PC-3 (cell line): ENCODE measurements at regions of chr2 and their contacts with region 1.

Region 1: GRCh38 chr2:57720728-57721627 is 325.6 kb upstream of the VRK2 start:
- DNase-seq: peak; percentile 76
- ATAC-seq: peak; percentile 97
- H3K4me3 ChIP-seq: peak overlapping the region; percentile 45
- H3K27ac ChIP-seq: no peak overlapping the region
- H3K4me1 ChIP-seq: peaks cover 15% of the 10 kb centered on the region
- H3K27me3 ChIP-seq: no peaks in the 10 kb centered on the region
- CTCF ChIP-seq: peak; percentile 96

Region 2: GRCh38 chr2:57674025-57674424 is 47.0 kb before region 1 on chr2:
- CTCF ChIA-PET with region 1: no interaction called
- POLR2A ChIA-PET with region 1: no interaction called
- intact Hi-C with region 1: no loop called
- DNase-seq: no peak
- ATAC-seq: no peak
- H3K4me3 ChIP-seq: no peak overlapping the region
- H3K27ac ChIP-seq: no peak overlapping the region
- H3K4me1 ChIP-seq: peaks cover 4% of the 10 kb centered on the region; the same call in 1 of the 2 replicates
- H3K27me3 ChIP-seq: peaks cover 5% of the 10 kb centered on the region; the same call in 1 of the 2 replicates
- CTCF ChIP-seq: no peak

Region 3: GRCh38 chr2:57701391-57701815 is 19.6 kb before region 1 on chr2:
- CTCF ChIA-PET with region 1: no interaction called
- POLR2A ChIA-PET with region 1: no interaction called
- intact Hi-C with region 1: no loop called
- DNase-seq: no peak
- ATAC-seq: no peak
- H3K4me3 ChIP-seq: no peak overlapping the region
- H3K27ac ChIP-seq: no peak overlapping the region
- H3K4me1 ChIP-seq: 0 out of 2 replicates have a peak, but pooled peaks cover under 1% of the 10 kb centered on the region
- H3K27me3 ChIP-seq: no peaks in the 10 kb centered on the region
- CTCF ChIP-seq: 0 out of 2 replicates have a peak, but pooled peaks have one; percentile 16

Region 4: GRCh38 chr2:57796527-57796926 is 75.5 kb after region 1 on chr2:
- CTCF ChIA-PET with region 1: no interaction called
- POLR2A ChIA-PET with region 1: no interaction called
- intact Hi-C with region 1: no loop called
- DNase-seq: no peak
- ATAC-seq: no peak
- H3K4me3 ChIP-seq: no peak overlapping the region
- H3K27ac ChIP-seq: no peak overlapping the region
- H3K4me1 ChIP-seq: no peaks in the 10 kb centered on the region
- H3K27me3 ChIP-seq: no peaks in the 10 kb centered on the region
- CTCF ChIP-seq: no peak

Region 5: DNA sequence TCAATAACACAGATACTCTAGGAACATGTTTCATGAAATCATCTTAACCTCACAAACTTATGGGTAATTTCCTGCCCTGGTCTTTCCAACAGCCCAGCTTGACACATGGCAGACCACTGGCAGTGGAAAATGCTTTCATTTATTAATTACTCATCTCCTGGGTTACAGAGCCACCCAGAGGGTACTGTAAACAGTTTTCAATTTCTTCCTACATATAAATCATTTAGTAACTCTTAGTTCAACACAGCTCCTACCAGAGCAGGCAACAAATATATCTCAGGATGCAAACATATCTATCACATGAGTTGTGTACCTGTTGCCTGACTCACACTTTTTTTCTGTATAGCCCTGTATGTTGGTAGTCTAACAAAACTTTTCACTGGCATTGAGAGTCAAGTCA is 226.4 kb after region 1 on chr2:
- CTCF ChIA-PET with region 1: no interaction called
- POLR2A ChIA-PET with region 1: no interaction called
- intact Hi-C with region 1: loop called (anchors 5 kb)
- DNase-seq: peak; percentile 58
- ATAC-seq: peak; percentile 93
- H3K4me3 ChIP-seq: no peak overlapping the region
- H3K27ac ChIP-seq: no peak overlapping the region
- H3K4me1 ChIP-seq: 0 out of 2 replicates have a peak, but pooled peaks cover 12% of the 10 kb centered on the region
- H3K27me3 ChIP-seq: no peaks in the 10 kb centered on the region
- CTCF ChIP-seq: peak; percentile 45

Region 6: DNA sequence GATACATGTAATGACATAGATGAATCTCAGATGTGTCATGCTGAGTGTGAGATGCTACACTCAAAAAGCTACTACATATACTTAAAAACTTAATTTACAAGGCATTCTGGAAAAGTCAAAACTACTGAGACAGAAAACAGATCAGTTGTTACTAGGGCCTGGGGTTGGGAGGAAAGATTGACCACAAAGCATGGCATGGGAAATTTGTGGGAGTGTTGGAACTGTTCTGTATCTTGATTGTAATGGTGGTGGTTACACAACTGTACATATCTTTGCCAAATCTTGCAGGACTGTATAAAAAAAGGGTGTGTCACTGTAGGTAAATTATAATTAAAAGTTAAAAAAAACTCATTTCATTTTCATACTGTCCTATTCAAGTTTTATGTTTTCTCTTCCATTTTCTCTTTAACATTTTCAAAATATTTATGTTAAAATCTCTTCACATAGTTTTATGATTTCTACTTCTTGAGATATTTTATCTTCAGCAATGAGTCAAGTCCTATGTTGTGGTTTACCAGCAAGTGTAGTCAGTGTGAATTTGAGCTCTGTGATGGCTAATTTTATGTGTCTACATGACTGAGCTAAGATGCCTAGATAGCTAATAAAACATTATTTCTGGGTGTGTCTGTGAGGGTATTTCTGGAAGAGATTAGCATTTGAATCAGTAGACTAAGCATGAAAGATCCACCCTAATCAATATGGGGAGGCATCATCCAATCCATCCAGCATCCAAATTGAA is 267.0 kb after region 1 on chr2:
- CTCF ChIA-PET with region 1: no interaction called
- POLR2A ChIA-PET with region 1: interaction called, 11 read pairs
- intact Hi-C with region 1: no loop called
- DNase-seq: peak; percentile 76
- ATAC-seq: peak; percentile 88
- H3K4me3 ChIP-seq: no peak overlapping the region
- H3K27ac ChIP-seq: peak overlapping the region; percentile 67
- H3K4me1 ChIP-seq: peaks cover 22% of the 10 kb centered on the region
- H3K27me3 ChIP-seq: no peaks in the 10 kb centered on the region
- CTCF ChIP-seq: no peak

Region 7: DNA sequence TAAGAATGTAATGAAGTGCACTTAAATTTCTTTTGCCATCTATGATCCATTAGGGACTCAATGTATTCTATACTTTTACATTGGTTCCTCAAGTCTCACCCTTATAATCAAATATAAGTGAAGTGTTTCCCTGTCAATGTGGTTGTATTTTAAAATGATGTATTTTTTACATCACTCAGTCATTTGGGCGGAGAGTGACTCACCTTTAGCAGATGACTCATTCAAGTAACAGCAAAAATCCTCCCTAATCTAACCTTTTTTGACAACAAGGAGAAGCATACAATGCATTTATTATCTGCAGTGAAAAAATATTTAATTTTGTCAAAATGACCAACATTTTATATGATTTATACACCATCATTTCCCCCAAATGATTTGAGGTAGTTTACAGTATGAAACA is 425.7 kb after region 1 on chr2:
- CTCF ChIA-PET with region 1: no interaction called
- POLR2A ChIA-PET with region 1: interaction called, 17 read pairs
- intact Hi-C with region 1: no loop called
- DNase-seq: peak; percentile 68
- ATAC-seq: peak; percentile 68
- H3K4me3 ChIP-seq: no peak overlapping the region
- H3K27ac ChIP-seq: peak overlapping the region; percentile 59
- H3K4me1 ChIP-seq: peaks cover 12% of the 10 kb centered on the region
- H3K27me3 ChIP-seq: no peaks in the 10 kb centered on the region
- CTCF ChIP-seq: no peak